PC-3 (cell line): ENCODE measurements at regions of chr7 and their contacts with region 1.

Region 1: GRCh38 chr7:123748734-123749536 is at the start of gene WASL:
- DNase-seq: peak; percentile 89
- ATAC-seq: peak; percentile 77
- H3K4me3 ChIP-seq: peak within 1 kb of the TSS; percentile 98
- H3K27ac ChIP-seq: peak within 1 kb of the TSS; percentile 87
- H3K4me1 ChIP-seq: peaks cover 29% of the 10 kb centered on the region
- H3K27me3 ChIP-seq: no peaks in the 10 kb centered on the region
- CTCF ChIP-seq: no peak
- total RNA-seq, gene WASL: 8.5 and 10.9 TPM in 2 replicates

Region 2: GRCh38 chr7:123472750-123473445 is 276.0 kb before region 1 on chr7:
- CTCF ChIA-PET with region 1: no interaction called
- POLR2A ChIA-PET with region 1: no interaction called
- intact Hi-C with region 1: no loop called
- DNase-seq: no peak
- ATAC-seq: no peak
- H3K4me3 ChIP-seq: no peak overlapping the region
- H3K27ac ChIP-seq: no peak overlapping the region
- H3K4me1 ChIP-seq: no peaks in the 10 kb centered on the region
- H3K27me3 ChIP-seq: no peaks in the 10 kb centered on the region
- CTCF ChIP-seq: no peak

Region 3: GRCh38 chr7:123682690-123683089 is 66.2 kb before region 1 on chr7:
- CTCF ChIA-PET with region 1: interaction called, 8 read pairs
- POLR2A ChIA-PET with region 1: no interaction called
- intact Hi-C with region 1: loop called (anchors 2 kb)
- DNase-seq: peak; percentile 78
- ATAC-seq: peak; percentile 72
- H3K4me3 ChIP-seq: no peak overlapping the region
- H3K27ac ChIP-seq: no peak overlapping the region
- H3K4me1 ChIP-seq: no peaks in the 10 kb centered on the region
- H3K27me3 ChIP-seq: no peaks in the 10 kb centered on the region
- CTCF ChIP-seq: peak; percentile 65

Region 4: GRCh38 chr7:123712619-123713018 is 36.3 kb before region 1 on chr7:
- CTCF ChIA-PET with region 1: no interaction called
- POLR2A ChIA-PET with region 1: interaction called, 3 read pairs
- intact Hi-C with region 1: loop called (anchors 5 kb)
- DNase-seq: no peak
- ATAC-seq: no peak
- H3K4me3 ChIP-seq: no peak overlapping the region
- H3K27ac ChIP-seq: no peak overlapping the region
- H3K4me1 ChIP-seq: peaks cover 17% of the 10 kb centered on the region
- H3K27me3 ChIP-seq: no peaks in the 10 kb centered on the region
- CTCF ChIP-seq: no peak

Region 5: DNA sequence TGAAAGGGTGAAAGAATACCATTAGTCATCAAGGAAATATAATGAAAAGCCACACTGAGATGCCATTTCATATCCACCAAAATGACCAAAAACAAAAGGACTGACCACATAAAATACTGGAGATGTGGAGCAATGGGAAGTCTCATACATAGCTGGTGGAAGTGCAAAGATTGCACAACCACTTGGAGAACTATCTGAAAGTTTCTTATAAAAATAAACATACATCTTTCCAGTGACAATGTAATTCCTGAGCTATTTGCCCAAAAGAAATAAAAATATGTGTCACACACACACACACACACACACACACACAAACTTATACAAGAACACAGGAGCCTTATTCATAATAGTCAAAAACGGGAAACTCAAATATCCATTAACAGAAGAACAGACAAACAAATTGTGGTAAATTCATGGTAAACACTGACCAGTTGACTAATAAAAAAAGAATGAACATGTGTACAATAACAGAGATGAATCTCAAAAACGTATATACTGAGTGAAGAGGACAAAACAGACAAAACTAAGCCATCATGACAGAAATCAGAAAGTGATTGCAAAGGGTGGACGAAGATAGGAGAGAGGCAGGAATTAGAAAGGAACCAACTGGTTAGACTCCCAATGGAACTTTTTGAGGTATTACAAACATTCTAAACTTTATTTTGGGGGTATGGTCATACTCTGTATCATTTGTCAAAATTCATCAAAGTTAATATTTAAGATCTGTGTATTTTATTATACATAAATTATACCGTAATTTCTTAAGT is 21.7 kb before region 1 on chr7:
- CTCF ChIA-PET with region 1: no interaction called
- POLR2A ChIA-PET with region 1: interaction called, 26 read pairs
- intact Hi-C with region 1: loop called (anchors 1 kb)
- DNase-seq: peak; percentile 74
- ATAC-seq: peak; percentile 84
- H3K4me3 ChIP-seq: peak overlapping the region; percentile 13; the same call in 1 of the 2 replicates
- H3K27ac ChIP-seq: peak overlapping the region; percentile 13
- H3K4me1 ChIP-seq: peaks cover 23% of the 10 kb centered on the region
- H3K27me3 ChIP-seq: no peaks in the 10 kb centered on the region
- CTCF ChIP-seq: no peak

Region 6: DNA sequence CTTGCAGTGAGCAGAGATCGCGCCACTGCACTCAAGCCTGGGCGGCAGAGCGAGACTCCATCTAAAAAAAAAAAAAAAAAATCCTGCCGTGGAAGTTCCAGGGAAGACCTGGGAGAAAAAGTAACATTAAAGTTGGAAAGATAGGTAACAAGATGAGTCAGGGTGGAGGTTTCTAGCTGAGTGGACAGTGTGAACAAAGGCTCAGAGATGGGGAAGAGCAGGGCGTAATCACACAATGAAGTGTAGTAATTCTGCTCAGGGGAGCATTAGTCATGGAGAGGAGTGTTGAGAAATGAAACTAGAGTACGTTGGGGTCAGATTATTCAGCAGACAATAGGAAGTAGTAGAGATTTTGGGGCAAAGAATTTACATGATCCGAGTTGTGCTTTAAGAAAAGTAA is 21.4 kb after region 1 on chr7:
- CTCF ChIA-PET with region 1: interaction called, 4 read pairs
- POLR2A ChIA-PET with region 1: interaction called, 10 read pairs
- intact Hi-C with region 1: loop called (anchors 1 kb)
- DNase-seq: peak; percentile 89
- ATAC-seq: peak; percentile 73
- H3K4me3 ChIP-seq: peak overlapping the region; percentile 43
- H3K27ac ChIP-seq: peak overlapping the region; percentile 75
- H3K4me1 ChIP-seq: peaks cover 60% of the 10 kb centered on the region
- H3K27me3 ChIP-seq: no peaks in the 10 kb centered on the region
- CTCF ChIP-seq: no peak

Region 7: DNA sequence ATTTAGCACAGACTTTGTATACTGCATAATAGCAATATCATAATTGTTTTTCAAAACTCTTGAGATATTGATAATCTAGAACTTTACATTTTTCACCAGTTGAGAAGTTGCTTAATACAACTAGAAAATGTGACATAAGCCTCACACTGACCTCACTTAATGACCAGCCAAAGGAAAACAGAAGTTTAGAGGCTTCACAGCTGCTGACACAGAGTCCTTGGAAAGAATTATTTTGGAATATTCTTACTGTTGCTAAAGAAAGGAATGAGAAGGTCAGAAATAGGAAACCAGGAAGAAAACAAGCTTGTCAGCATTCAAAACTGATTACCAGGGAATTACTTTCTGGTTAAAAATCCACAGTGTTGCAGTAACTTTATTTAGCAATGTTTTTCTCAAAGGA is 35.3 kb after region 1 on chr7:
- CTCF ChIA-PET with region 1: interaction called, 6 read pairs
- POLR2A ChIA-PET with region 1: interaction called, 3 read pairs
- intact Hi-C with region 1: loop called (anchors 5 kb)
- DNase-seq: no peak
- ATAC-seq: peak; percentile 37; the same call in 1 of the 2 replicates
- H3K4me3 ChIP-seq: no peak overlapping the region
- H3K27ac ChIP-seq: peak overlapping the region; percentile 59
- H3K4me1 ChIP-seq: peaks cover 28% of the 10 kb centered on the region
- H3K27me3 ChIP-seq: no peaks in the 10 kb centered on the region
- CTCF ChIP-seq: no peak